Aorta (tissue), 5 donors: ENCODE measurements at regions of chr17 and their contacts with region 1.

Region 1: GRCh38 chr17:72985881-72986720 is 106.4 kb downstream of the SLC39A11 start:
- DNase-seq: peak; percentile 76 to 77
- ATAC-seq: peak; percentile 87
- H3K4me3 ChIP-seq: no peak overlapping the region
- H3K27ac ChIP-seq: no peak overlapping the region
- H3K4me1 ChIP-seq: no peaks in the 10 kb centered on the region
- H3K27me3 ChIP-seq: no peaks in the 10 kb centered on the region

Region 2: DNA sequence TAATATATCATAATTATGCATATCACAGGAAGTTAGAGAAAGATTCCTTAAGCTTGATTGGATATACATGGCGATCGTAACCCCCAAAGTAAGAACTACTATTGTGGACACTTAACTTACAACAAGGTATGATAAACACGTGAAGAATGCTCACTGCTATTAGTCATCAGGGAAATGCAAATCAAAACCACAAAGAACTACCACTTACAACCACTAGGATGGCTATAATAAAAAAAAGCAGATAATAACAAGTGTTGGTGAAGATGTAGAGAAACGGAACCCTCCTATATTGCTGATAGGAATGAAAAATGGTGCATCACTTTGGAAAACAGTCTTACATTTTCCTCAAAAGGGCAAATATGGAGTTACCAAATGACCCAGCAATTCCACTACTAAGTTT is 159.5 kb before region 1 on chr17:
- intact Hi-C with region 1: no loop called
- DNase-seq: no peak
- ATAC-seq: no peak
- H3K4me3 ChIP-seq: no peak overlapping the region
- H3K27ac ChIP-seq: no peak overlapping the region
- H3K4me1 ChIP-seq: no peaks in the 10 kb centered on the region
- H3K27me3 ChIP-seq: no peaks in the 10 kb centered on the region

Region 3: GRCh38 chr17:72931163-72931562 is 54.9 kb before region 1 on chr17:
- intact Hi-C with region 1: no loop called
- DNase-seq: no peak
- ATAC-seq: no peak
- H3K4me3 ChIP-seq: no peak overlapping the region
- H3K27ac ChIP-seq: no peak overlapping the region
- H3K4me1 ChIP-seq: peaks cover 0 to 2% of the 10 kb centered on the region in 2 donors
- H3K27me3 ChIP-seq: no peaks in the 10 kb centered on the region

Region 4: GRCh38 chr17:73092523-73093135 is 106.5 kb after region 1 on chr17 and contains the start of gene SLC39A11:
- intact Hi-C with region 1: loop called in 1 of 2 experiments (anchors 10 kb)
- DNase-seq: peak; percentile 96 to 98
- ATAC-seq: peak; percentile 96
- H3K4me3 ChIP-seq: peak within 1 kb of the TSS; percentile 48 to 62
- H3K27ac ChIP-seq: peak within 1 kb of the TSS in 1 of 2 donors; percentile 75
- H3K4me1 ChIP-seq: no peaks in the 10 kb centered on the region
- H3K27me3 ChIP-seq: no peaks in the 10 kb centered on the region
- total RNA-seq, gene SLC39A11: 22.7 to 31.8 TPM

Region 5: DNA sequence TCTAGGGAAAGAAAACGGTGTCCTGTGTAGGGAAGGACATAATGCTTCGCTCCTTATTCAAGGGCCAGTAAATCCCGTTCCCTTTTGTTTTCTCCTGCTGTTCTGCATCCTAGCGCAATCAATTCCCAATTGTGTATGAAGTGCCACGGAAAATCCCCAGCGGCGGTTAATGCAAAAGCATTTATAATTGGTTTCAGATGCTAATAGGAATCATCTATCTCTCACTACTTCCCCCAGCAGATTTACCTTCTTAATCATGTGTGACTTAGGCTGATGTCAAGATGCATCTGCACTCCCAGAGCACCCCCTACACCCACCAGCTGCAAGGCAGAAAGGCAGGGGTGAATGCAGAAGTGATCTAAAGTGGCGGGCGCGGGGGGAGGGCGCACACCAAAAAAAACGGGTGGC is 146.0 kb after region 1 on chr17:
- intact Hi-C with region 1: no loop called
- DNase-seq: no peak
- ATAC-seq: no peak
- H3K4me3 ChIP-seq: no peak overlapping the region
- H3K27ac ChIP-seq: no peak overlapping the region
- H3K4me1 ChIP-seq: no peaks in the 10 kb centered on the region
- H3K27me3 ChIP-seq: peaks cover 0 to 1% of the 10 kb centered on the region in 2 donors

Region 6: GRCh38 chr17:73156166-73156840 is 170.2 kb after region 1 on chr17:
- intact Hi-C with region 1: loop called in 1 of 2 experiments (anchors 1 kb)
- DNase-seq: peak; percentile 80 to 88
- ATAC-seq: peak; percentile 94
- H3K4me3 ChIP-seq: no peak overlapping the region
- H3K27ac ChIP-seq: no peak overlapping the region
- H3K4me1 ChIP-seq: no peaks in the 10 kb centered on the region
- H3K27me3 ChIP-seq: no peaks in the 10 kb centered on the region

Region 7: GRCh38 chr17:73165616-73166404 is 179.7 kb after region 1 on chr17:
- intact Hi-C with region 1: loop called in 1 of 2 experiments (anchors 2 kb)
- DNase-seq: no peak
- ATAC-seq: peak; percentile 58
- H3K4me3 ChIP-seq: peak overlapping the region in 1 of 2 donors; percentile 40
- H3K27ac ChIP-seq: no peak overlapping the region
- H3K4me1 ChIP-seq: no peaks in the 10 kb centered on the region
- H3K27me3 ChIP-seq: peaks cover 0 to 3% of the 10 kb centered on the region in 2 donors